ENCODE measurements at regions of chr18 and their contacts with region 1.

Region 1: GRCh38 chr18:48709371-48710062 is 170.7 kb downstream of the CTIF start:
- DNase-seq: no peak
- ATAC-seq: no peak
- H3K4me3 ChIP-seq: no peak overlapping the region
- H3K4me3 Mint-ChIP-seq: no peak overlapping the region
- H3K27ac ChIP-seq: no peak overlapping the region
- H3K27ac Mint-ChIP-seq: no peak overlapping the region
- H3K4me1 ChIP-seq: no peaks in the 10 kb centered on the region
- H3K4me1 Mint-ChIP-seq: no peaks in the 10 kb centered on the region
- H3K27me3 ChIP-seq: no peaks in the 10 kb centered on the region
- H3K27me3 Mint-ChIP-seq: no peaks in the 10 kb centered on the region
- CTCF ChIP-seq: no peak

Region 2: GRCh38 chr18:47191961-47192360 is 1517.6 kb before region 1 on chr18:
- CTCF ChIA-PET with region 1: no interaction called
- POLR2A ChIA-PET with region 1: no interaction called
- intact Hi-C with region 1: loop called in 1 of 2 experiments (anchors 5 kb)
- DNase-seq: no peak
- ATAC-seq: no peak
- H3K4me3 ChIP-seq: no peak overlapping the region
- H3K4me3 Mint-ChIP-seq: no peak overlapping the region
- H3K27ac ChIP-seq: no peak overlapping the region
- H3K27ac Mint-ChIP-seq: no peak overlapping the region
- H3K4me1 ChIP-seq: no peaks in the 10 kb centered on the region
- H3K4me1 Mint-ChIP-seq: peaks cover 2% of the 10 kb centered on the region
- H3K27me3 ChIP-seq: peaks cover 0 to 4% of the 10 kb centered on the region in 2 experiments
- H3K27me3 Mint-ChIP-seq: peaks cover 41% of the 10 kb centered on the region
- CTCF ChIP-seq: no peak

Measured in CD8-positive, alpha-beta T cell (primary cell).